Right lobe of liver (tissue), 6 donors: ENCODE measurements at regions of chr10 and their contacts with region 1.

Region 1: DNA sequence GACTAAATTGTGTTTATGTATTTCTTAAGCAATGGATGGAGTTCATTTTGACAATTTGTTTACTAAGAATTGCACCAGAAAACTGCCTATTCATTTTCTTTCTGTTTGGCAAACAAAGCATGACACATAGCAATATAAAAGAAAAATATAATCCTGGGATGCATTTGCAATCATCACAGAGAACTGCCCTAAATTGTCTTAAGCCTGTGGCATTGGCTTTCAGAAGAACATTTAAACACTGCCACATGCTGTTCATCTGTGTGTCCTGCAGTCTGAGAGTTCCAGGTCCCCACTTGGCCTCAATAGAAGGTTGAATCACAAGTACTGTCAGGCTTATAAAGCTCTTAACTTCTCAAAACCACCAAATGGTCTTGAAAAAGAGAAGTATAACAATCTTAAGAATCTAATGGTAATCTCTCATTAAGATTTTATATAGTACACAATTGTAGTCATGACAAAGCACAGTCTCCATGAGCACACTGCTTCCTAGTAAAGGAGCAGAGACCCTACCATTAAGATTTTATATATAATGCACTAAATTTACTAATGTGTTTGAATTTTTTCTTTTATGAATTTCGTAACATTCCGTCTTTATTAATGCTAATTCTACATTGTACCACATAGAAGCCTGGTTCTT is 29.9 kb downstream of the RNLS start:
- DNase-seq: peak in 2 of 3 donors; percentile 15 to 51
- ATAC-seq: peak; percentile 97 to 99 (median 98)
- H3K4me3 ChIP-seq: no peak overlapping the region
- H3K27ac ChIP-seq: no peak overlapping the region
- H3K4me1 ChIP-seq: no peaks in the 10 kb centered on the region
- H3K27me3 ChIP-seq: no peaks in the 10 kb centered on the region
- CTCF ChIP-seq: peak; percentile 76 to 91 (median 84)
- POLR2A ChIP-seq: no peak

Region 2: GRCh38 chr10:87850742-87851205 is 702.5 kb before region 1 on chr10:
- intact Hi-C with region 1: loop called in 1 of 2 experiments (anchors 10 kb)
- DNase-seq: peak; percentile 49 to 65 (median 60)
- ATAC-seq: peak; percentile 98 to 99 (median 99)
- H3K4me3 ChIP-seq: no peak overlapping the region
- H3K27ac ChIP-seq: no peak overlapping the region
- H3K4me1 ChIP-seq: peaks cover 0 to 8% (median 2%) of the 10 kb centered on the region in 4 donors
- H3K27me3 ChIP-seq: no peaks in the 10 kb centered on the region
- CTCF ChIP-seq: peak; percentile 64 to 77 (median 70)
- POLR2A ChIP-seq: no peak

Region 3: DNA sequence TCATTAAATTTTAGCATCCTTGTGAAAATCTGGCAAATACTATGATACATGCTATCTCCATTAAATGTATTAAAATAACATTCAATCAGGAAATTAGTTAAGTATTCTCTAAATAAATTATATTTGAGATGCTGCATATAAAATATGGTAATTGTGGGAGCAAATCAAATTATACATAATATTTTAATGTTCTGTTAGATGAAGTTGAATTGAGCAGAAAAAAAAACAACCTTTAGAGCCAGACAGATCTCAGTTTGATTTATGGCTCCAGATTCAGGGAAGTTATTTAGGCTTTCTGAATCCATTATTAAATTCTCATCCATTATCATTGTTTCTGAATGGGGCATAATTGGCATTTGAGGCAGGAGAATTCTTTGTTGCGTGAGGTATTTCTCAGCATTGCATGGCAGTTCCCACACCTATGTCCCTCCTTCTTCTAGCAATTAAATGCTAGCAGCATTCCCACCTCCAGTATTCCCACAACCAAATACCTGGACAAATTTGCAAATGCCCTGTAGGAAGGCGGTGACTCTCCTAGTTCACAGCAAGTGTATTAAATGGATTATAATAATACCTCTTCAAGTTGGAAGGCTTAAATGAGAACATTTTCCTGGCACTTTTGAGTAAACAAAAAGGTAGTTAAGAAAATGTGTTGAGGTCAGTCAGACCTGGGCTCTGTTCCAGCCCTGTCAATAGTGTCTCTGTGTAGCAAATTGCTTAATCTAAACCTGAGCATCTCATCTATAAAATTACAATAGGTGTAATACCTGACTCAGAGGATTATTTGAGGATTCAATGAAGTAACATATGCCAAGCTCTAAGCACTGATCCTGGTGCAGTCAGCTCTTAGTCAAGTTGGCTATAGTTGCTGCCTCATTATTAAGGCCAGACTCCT is 79.0 kb before region 1 on chr10:
- intact Hi-C with region 1: loop called in 1 of 2 experiments (anchors 10 kb)
- DNase-seq: peak; percentile 49 to 73 (median 67)
- ATAC-seq: peak; percentile 73 to 93 (median 89)
- H3K4me3 ChIP-seq: no peak overlapping the region
- H3K27ac ChIP-seq: no peak overlapping the region
- H3K4me1 ChIP-seq: peaks cover 0 to 15% (median 6%) of the 10 kb centered on the region in 4 donors
- H3K27me3 ChIP-seq: no peaks in the 10 kb centered on the region
- CTCF ChIP-seq: no peak
- POLR2A ChIP-seq: no peak